Sigmoid colon (tissue), 7 donors: ENCODE measurements at regions of chr17 and their contacts with region 1.

Region 1: DNA sequence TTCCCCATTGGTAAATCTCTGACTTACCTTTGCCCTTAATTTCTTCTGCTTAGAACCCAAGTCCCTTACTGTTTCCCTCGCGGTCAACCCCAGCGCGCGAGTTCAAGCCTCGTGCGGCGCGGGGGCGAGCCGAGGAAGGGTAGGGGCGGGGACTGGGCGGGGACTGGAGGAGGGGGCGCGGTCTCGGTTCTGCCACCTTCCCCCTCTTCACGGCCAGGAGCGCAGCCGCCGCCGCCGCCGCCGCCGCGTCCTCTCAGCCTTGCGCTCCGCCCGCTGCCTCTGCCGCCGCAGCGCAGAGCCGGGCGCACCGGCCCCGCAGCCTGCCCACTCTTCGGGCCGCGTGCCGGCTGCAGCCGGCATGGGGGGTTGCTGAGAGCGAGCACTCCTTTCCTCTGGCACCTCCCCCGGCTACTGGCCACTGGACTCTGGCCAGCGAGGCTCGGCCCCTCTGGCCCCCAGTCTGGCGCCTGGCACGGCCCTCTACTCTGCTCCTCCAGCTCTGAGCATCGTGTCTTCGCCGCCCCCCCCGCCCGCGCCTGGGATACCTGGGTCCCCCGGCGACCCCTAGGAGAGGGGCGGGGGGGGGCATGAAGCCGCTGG is at the start of gene RAPGEFL1:
- DNase-seq: peak; percentile 87
- H3K4me3 ChIP-seq: peak within 1 kb of the TSS; percentile 34 to 57 (median 50)
- H3K27ac ChIP-seq: peak within 1 kb of the TSS in 2 of 4 donors; percentile 43 to 54
- H3K4me1 ChIP-seq: peaks cover 0 to 20% (median 18%) of the 10 kb centered on the region in 4 donors
- H3K27me3 ChIP-seq: no peaks in the 10 kb centered on the region
- CTCF ChIP-seq: no peak
- EP300 ChIP-seq: no peak
- POLR2A ChIP-seq: no peak
- total RNA-seq, gene RAPGEFL1: 0.99 to 4.3 (median 2.6) TPM

Region 2: DNA sequence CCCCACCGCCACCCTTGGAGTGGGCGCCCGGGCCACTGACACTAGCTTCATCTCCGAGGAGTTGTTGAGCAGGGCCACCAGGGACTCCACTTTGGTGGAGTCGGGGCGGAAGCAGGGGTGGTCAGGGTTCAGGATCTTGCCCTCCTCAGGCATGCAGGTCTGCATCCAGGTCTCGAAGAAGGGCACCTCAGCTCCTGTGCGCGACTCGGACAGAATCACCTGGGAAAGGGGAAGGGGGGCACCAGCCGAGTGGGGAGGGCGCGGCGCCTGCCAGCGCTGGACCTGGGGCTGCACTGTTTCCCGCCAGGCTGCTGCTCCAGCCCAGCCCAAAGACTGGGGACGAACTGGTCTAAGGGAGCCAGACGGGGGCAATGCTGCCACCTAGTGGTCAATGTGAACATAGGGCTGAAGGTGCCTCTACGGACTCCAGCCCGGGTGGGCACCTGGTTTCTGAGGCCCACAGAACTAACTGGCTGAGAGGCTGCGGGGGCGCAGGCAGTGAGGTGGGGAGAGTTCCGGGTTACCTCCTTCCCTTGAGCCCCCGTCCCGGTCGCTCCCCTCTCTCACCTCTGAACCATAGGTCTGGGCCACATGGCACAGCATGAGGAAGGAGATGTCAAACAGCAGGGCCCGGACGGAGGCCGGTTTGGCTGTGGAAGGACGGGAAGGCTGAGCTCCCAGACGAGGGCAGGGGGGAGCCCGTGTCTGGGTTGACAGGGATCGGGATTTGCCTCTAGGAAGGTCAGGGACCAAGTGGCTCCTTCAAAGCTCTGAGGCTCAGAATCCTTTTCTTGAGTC is 150.4 kb before region 1 on chr17:
- intact Hi-C with region 1: loop called (anchors 5 kb)
- DNase-seq: peak; percentile 94
- H3K4me3 ChIP-seq: no peak overlapping the region
- H3K27ac ChIP-seq: peak overlapping the region in 1 of 4 donors; percentile 9
- H3K4me1 ChIP-seq: peaks cover 0 to 33% (median 27%) of the 10 kb centered on the region in 4 donors
- H3K27me3 ChIP-seq: no peaks in the 10 kb centered on the region
- CTCF ChIP-seq: peak; percentile 75 to 95 (median 86)
- EP300 ChIP-seq: no peak
- POLR2A ChIP-seq: no peak

Region 3: GRCh38 chr17:40139566-40140058 is 37.8 kb before region 1 on chr17:
- intact Hi-C with region 1: loop called (anchors 5 kb)
- DNase-seq: no peak
- H3K4me3 ChIP-seq: peak overlapping the region; percentile 43 to 87 (median 78)
- H3K27ac ChIP-seq: peak overlapping the region; percentile 93 to 99 (median 98)
- H3K4me1 ChIP-seq: peaks cover 0 to 28% (median 21%) of the 10 kb centered on the region in 4 donors
- H3K27me3 ChIP-seq: no peaks in the 10 kb centered on the region
- CTCF ChIP-seq: peak in 1 of 4 experiments; percentile 7
- EP300 ChIP-seq: no peak
- POLR2A ChIP-seq: no peak